ENCODE measurements at regions of chr9 and their contacts with region 1.

Region 1: DNA sequence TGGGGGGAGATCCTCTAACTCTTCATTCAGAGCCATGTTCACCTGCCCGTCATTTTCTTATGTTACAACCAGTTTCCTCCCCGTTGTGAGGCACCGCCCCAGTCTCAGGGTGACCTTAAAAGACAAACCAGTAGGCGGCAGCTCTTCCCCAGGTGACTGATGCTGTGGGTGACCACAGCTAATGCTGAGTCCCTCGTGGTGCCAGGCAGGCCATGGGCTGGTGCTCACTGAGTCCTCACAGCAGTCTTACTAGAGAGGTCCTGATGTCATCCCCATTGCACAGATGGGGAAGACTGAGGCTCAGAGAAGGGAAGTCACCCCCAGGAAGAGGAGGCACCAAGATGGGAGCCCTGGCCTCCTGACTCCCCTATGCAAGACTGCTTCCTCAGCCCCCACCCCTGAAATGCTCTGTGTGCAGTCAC is 949 bp downstream of the CFAP157 start:
- DNase-seq: peak in 10 of 14 experiments; percentile 15 to 77 (median 32)
- ATAC-seq: peak; percentile 76
- H3K4me3 ChIP-seq: no peak overlapping the region
- H3K4me3 Mint-ChIP-seq: no peak overlapping the region
- H3K27ac ChIP-seq: no peak overlapping the region
- H3K27ac Mint-ChIP-seq: no peak overlapping the region
- H3K4me1 ChIP-seq: peaks cover 29% of the 10 kb centered on the region
- H3K4me1 Mint-ChIP-seq: peaks cover 19% of the 10 kb centered on the region
- H3K27me3 ChIP-seq: no peaks in the 10 kb centered on the region
- H3K27me3 Mint-ChIP-seq: no peaks in the 10 kb centered on the region
- CTCF ChIP-seq: no peak

Region 2: DNA sequence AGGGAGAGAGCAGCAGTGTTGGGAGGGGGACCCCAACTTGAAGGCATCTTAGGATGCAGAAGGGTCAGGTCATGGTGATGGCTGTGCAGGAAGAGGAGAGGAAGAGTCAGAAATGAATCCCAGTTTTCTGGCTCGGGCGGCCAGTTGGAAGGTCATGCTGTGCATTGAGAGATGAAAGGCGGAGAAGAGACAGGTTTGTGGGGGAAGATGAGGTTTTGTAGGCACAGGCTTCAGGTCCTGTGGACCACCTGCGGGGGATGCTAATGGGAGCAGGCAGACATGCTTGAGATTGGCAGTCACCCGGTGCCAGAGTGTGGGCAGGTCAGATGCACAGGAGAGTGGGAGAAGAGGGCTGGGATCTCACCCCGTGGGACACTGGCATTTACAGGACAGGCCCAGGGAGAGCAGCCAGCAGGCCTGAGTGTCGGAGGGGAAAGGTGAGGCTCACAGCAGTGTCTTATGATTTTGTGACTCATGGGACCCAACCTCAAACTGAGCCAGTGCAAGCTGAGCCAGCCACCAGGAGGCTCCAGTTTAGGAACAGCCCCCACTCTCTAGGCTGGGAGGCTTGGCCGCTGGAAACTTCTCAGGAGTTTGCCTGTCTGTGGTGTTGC is 78.2 kb before region 1 on chr9:
- CTCF ChIA-PET with region 1: no interaction called
- POLR2A ChIA-PET with region 1: no interaction called
- intact Hi-C with region 1: loop called in 1 of 2 experiments (anchors 5 kb)
- DNase-seq: peak in 3 of 14 experiments; percentile 14 to 27 (median 20)
- ATAC-seq: no peak
- H3K4me3 ChIP-seq: no peak overlapping the region
- H3K4me3 Mint-ChIP-seq: no peak overlapping the region
- H3K27ac ChIP-seq: no peak overlapping the region
- H3K27ac Mint-ChIP-seq: no peak overlapping the region
- H3K4me1 ChIP-seq: peaks cover 6% of the 10 kb centered on the region
- H3K4me1 Mint-ChIP-seq: no peaks in the 10 kb centered on the region
- H3K27me3 ChIP-seq: no peaks in the 10 kb centered on the region
- H3K27me3 Mint-ChIP-seq: peaks cover 4% of the 10 kb centered on the region
- CTCF ChIP-seq: no peak